GM10248 (cell line): ENCODE measurements at regions of chr5 and their contacts with region 1.

Region 1: DNA sequence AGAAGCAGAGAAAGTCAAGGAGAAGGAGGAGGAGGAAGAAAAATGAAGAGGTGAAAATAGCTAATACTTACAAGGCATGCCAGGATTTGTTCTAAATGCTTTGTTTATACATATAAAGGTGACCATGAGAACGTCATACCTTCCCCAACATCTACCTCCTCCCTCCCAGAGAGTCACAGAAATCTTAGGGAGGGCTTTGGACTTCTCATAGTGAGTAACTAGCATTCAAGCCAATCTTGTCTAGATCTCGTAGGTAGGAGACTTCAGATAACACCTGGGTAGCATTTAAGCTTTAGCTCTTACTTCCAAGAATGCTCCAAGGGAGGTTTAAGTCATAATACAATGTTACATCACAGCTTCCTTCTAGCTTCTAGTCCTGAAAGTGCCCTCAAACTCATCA is 36.5 kb upstream of the GPBP1 start:
- DNase-seq: no peak
- CTCF ChIP-seq: no peak

Region 2: DNA sequence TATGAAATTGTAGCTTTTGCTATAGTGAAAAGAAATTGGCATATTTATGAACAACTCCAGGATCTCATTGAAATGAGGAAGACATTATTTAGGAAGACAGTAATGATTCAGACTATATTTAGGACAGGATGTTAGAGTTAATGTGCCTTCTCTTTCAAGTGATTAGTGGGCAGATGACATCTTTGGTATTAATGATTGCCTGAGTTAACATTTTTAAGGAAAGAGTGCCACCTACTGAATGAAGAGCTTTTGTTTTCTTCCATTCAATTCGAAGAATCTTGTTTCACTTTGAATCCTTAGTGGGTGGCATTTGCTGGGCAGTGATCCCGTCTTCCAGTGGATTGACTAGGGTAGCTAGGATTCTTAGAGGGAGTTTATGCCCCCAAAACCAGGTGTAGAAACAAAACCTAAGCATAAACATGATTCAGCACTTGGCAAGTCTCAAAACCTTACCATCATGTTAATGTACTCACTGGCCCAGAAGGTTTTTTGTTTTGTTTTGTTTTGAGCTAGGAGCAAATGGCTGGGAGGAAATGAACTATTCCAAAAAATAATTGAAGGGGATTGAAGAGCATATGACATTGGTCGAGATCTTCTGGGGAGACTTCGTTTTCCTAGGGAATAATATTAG is 298.9 kb before region 1 on chr5:
- CTCF ChIA-PET with region 1: interaction called, 16 read pairs
- POLR2A ChIA-PET with region 1: no interaction called
- DNase-seq: peak; percentile 28
- CTCF ChIP-seq: peak; percentile 35

Region 3: DNA sequence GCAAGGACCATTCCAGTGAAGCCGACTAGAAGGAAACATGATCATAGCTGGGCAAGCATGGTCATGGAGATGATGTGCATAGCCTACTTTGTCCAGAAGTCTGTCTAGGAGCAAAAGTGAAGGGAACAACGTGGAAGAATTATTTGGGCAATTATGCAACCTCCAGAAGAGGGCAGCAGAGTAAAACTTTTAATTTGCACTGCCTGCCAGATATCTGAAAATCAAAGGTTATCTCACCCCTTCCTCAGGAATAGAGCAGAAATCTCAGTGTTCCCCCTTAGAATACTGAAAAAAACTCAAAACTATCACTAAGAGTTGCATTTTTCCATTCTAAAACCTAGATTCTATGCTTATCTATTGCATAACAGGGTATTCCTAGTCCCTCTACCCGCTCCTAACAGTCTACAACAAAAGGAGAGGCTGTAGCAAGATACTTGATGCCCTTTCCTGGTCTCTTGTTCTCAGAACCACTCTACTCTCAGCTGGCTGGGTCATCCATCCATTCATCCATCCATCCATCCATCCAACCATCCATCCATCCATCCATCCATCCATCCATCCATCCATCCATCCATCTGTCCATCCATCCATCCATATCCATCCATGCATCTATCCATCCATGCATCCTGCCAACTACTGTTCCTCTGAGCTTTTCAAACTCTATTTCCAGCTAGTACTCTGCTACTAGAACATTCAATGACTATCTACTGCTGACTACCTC is 236.4 kb before region 1 on chr5:
- CTCF ChIA-PET with region 1: interaction called, 60 read pairs
- POLR2A ChIA-PET with region 1: no interaction called
- DNase-seq: peak; percentile 40
- CTCF ChIP-seq: peak; percentile 66

Region 4: GRCh38 chr5:56950626-56951125 is 186.7 kb before region 1 on chr5:
- CTCF ChIA-PET with region 1: interaction called, 11 read pairs
- POLR2A ChIA-PET with region 1: no interaction called
- DNase-seq: peak; percentile 77
- CTCF ChIP-seq: no peak

Region 5: DNA sequence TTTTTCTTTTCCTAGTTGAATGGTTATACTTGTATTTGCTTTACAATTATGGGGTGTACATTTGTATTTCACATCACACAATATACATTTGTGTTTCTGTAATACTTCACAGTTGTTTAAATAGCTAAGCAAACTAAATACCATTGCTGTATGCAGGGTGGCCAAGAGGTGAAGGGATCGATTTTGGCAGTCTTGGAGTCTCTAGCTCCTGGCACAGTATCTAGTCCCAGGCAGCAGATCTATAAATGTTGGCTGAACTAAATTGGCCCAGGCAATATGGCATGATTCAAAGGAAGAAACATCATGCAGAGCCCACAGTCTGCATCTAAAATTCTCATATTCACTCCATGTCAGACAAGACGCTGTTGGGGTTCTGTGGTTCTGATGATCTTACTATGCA is 73.6 kb before region 1 on chr5:
- CTCF ChIA-PET with region 1: no interaction called
- POLR2A ChIA-PET with region 1: no interaction called
- DNase-seq: no peak
- CTCF ChIP-seq: no peak

Region 6: GRCh38 chr5:57113486-57113885 is 23.9 kb before region 1 on chr5:
- CTCF ChIA-PET with region 1: no interaction called
- POLR2A ChIA-PET with region 1: no interaction called
- DNase-seq: no peak
- CTCF ChIP-seq: no peak

Region 7: GRCh38 chr5:57157131-57157530 is 19.7 kb after region 1 on chr5:
- CTCF ChIA-PET with region 1: interaction called, 13 read pairs
- POLR2A ChIA-PET with region 1: no interaction called
- DNase-seq: no peak
- CTCF ChIP-seq: no peak